HepG2 (cell line): ENCODE measurements at regions of chr22 and their contacts with region 1.

Region 1: GRCh38 chr22:37676736-37677492 is 1.5 kb downstream of the LGALS1 start:
- DNase-seq: peak; percentile 75
- ATAC-seq: peak; percentile 20
- H3K4me3 ChIP-seq: peak overlapping the region; percentile 57 to 71 (median 59)
- H3K27ac ChIP-seq: peak overlapping the region; percentile 33
- H3K4me1 ChIP-seq: peaks cover 54% of the 10 kb centered on the region
- H3K27me3 ChIP-seq: no peaks in the 10 kb centered on the region
- CTCF ChIP-seq: no peak
- EP300 ChIP-seq: no peak
- POLR2A ChIP-seq: no peak
- RAD21 ChIP-seq: no peak

Region 2: GRCh38 chr22:37538590-37539357 is 138.1 kb before region 1 on chr22:
- CTCF ChIA-PET with region 1: interaction called, 3 read pairs
- POLR2A ChIA-PET with region 1: no interaction called
- in situ Hi-C with region 1: no loop called
- intact Hi-C with region 1: loop called (anchors 5 kb)
- DNase-seq: peak; percentile 88
- ATAC-seq: peak; percentile 98
- H3K4me3 ChIP-seq: peak overlapping the region in 1 of 3 experiments; percentile 32; a peak in 2 of 6 replicates
- H3K27ac ChIP-seq: no peak overlapping the region
- H3K4me1 ChIP-seq: peaks cover 77% of the 10 kb centered on the region
- H3K27me3 ChIP-seq: 0 out of 5 replicates have a peak, but pooled peaks cover 0 to 2% of the 10 kb centered on the region in 2 experiments
- CTCF ChIP-seq: peak; percentile 100
- EP300 ChIP-seq: peak; percentile 27 to 36; a peak in 2 of 4 replicates
- POLR2A ChIP-seq: no peak
- RAD21 ChIP-seq: peak; percentile 99

Region 3: DNA sequence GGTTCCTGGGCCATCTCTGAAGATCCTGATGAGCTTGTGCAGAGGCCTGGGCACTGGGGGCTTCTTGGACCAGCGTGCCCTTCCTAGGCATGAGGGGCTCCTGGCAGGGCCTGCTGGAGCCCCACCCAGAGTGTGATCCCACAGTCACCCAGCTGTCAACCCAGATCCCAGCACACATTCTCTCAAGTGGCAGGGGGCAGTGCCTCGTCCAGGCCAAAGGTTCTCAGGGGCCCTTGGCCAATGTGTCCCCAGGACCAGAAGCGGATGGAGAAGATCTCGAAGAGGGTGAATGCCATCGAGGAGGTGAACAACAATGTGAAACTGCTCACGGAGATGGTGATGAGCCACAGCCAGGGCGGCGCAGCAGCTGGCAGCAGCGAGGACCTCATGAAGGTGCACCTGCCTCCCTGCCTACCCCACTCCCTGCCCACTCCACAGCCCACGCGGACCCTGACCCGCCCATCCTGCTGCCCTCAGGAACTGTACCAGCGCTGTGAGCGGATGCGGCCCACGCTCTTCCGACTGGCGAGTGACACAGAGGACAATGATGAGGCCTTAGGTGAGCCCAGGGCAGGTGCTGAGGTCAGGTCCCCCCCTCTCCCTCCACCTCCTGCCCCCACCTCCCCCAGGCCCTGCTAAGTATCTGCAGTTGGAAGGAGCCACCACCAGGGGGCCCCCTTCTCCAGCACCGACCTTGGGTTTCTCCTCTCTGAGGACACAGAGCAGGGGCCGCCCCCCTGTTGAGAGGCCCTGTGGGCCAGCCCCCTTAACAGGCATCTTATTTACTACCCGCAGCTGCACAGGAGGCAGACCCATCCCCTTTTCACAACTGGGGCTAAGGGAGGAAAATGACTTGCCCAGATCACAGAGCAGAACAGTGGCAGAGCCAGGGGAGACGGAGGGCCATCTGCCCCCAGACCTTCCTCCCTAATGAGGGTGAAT is 53.6 kb before region 1 on chr22:
- CTCF ChIA-PET with region 1: interaction called, 11 read pairs
- POLR2A ChIA-PET with region 1: no interaction called
- in situ Hi-C with region 1: no loop called
- intact Hi-C with region 1: loop called (anchors 5 kb)
- DNase-seq: peak; percentile 50
- ATAC-seq: peak; percentile 73
- H3K4me3 ChIP-seq: 0 out of 6 replicates have a peak overlapping the region, but pooled peaks of 1 of the 3 experiments have one; percentile 3
- H3K27ac ChIP-seq: no peak overlapping the region
- H3K4me1 ChIP-seq: peaks cover 10% of the 10 kb centered on the region
- H3K27me3 ChIP-seq: no peaks in the 10 kb centered on the region; a peak in 1 of 5 replicates
- CTCF ChIP-seq: peak; percentile 78
- EP300 ChIP-seq: no peak
- POLR2A ChIP-seq: no peak
- RAD21 ChIP-seq: peak; percentile 71

Region 4: DNA sequence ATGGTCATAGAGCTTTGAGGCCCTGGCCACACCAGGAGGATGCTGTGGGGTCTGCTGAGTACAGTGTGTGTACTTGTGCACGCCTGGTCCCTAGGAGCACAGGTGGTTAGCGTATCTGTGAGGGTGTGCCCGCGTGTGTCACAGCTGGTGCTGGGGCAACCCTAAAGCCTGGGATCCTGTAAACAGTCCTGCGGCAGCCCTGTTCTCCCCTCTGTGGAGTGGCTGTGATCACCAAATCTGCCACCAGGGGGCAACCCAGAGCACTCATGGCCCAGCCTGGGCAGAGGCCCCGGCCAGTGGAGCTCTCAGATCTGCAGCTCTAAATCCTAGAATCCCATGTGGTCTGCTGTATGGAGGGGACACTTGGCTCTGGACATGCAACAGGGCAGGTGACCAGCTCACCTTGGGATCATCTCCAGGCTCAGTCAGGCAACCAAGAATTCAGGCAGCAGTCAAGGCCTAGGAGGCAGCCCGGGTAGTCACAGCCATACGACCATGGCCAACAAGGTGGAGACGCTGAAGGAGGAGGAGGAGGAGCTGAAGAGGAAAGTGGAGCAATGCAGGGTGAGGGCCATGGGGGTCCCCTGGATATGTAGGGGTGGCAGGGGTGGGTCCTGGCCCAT is 33.6 kb before region 1 on chr22:
- CTCF ChIA-PET with region 1: interaction called, 21 read pairs
- POLR2A ChIA-PET with region 1: interaction called, 7 read pairs
- in situ Hi-C with region 1: no loop called
- intact Hi-C with region 1: loop called (anchors 1 kb)
- DNase-seq: no peak
- ATAC-seq: peak; percentile 61
- H3K4me3 ChIP-seq: no peak overlapping the region; a peak in 1 of 6 replicates
- H3K27ac ChIP-seq: no peak overlapping the region
- H3K4me1 ChIP-seq: peaks cover 40% of the 10 kb centered on the region
- H3K27me3 ChIP-seq: no peaks in the 10 kb centered on the region
- CTCF ChIP-seq: peak; percentile 92
- EP300 ChIP-seq: no peak
- POLR2A ChIP-seq: no peak
- RAD21 ChIP-seq: peak; percentile 90

Region 5: DNA sequence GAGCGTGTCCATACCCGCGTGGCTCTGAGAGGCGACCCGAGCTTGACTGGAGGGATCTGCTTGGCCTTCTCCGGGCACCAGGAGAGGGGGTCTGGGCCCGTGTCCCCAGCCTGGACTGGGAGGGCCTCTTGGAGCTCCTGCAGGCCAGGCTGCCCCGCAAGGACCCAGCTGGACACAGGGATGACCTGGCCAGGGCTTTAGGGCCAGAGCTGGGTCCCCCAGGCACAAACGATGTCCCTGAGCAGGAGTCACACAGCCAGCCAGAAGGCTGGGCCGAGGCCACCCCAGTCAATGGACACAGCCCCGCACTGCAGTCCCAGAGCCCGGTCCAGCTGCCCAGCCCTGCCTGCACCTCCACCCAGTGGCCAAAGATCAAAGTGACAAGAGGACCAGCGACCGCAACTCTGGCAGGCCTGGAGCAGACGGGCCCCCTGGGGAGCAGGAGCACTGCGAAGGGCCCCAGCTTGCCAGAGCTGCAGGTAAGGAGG is 58.1 kb after region 1 on chr22:
- CTCF ChIA-PET with region 1: no interaction called
- POLR2A ChIA-PET with region 1: no interaction called
- in situ Hi-C with region 1: no loop called
- intact Hi-C with region 1: loop called (anchors 5 kb)
- DNase-seq: peak; percentile 72
- ATAC-seq: peak; percentile 86
- H3K4me3 ChIP-seq: peak overlapping the region; percentile 43 to 61 (median 49); a peak in 4 of 6 replicates
- H3K27ac ChIP-seq: peak overlapping the region; percentile 31
- H3K4me1 ChIP-seq: peaks cover 79% of the 10 kb centered on the region
- H3K27me3 ChIP-seq: no peaks in the 10 kb centered on the region
- CTCF ChIP-seq: peak; percentile 96
- EP300 ChIP-seq: no peak
- POLR2A ChIP-seq: no peak
- RAD21 ChIP-seq: peak; percentile 90

Region 6: GRCh38 chr22:38051900-38052862 is 375.3 kb after region 1 on chr22:
- CTCF ChIA-PET with region 1: no interaction called
- POLR2A ChIA-PET with region 1: no interaction called
- in situ Hi-C with region 1: no loop called
- intact Hi-C with region 1: no loop called
- DNase-seq: peak; percentile 84
- ATAC-seq: peak; percentile 89
- H3K4me3 ChIP-seq: peak overlapping the region in 2 of 3 experiments; percentile 27 to 57; a peak in 3 of 6 replicates
- H3K27ac ChIP-seq: no peak overlapping the region
- H3K4me1 ChIP-seq: peaks cover 43% of the 10 kb centered on the region
- H3K27me3 ChIP-seq: peaks cover 2 to 22% of the 10 kb centered on the region in 2 experiments; a peak in 3 of 5 replicates
- CTCF ChIP-seq: peak; percentile 100
- EP300 ChIP-seq: no peak
- POLR2A ChIP-seq: no peak
- RAD21 ChIP-seq: peak; percentile 99